Activated CD4-positive, alpha-beta memory T cell treated with anti-CD3 and anti-CD28 coated beads for 36 hours (primary cell): ENCODE measurements at regions of chr19 and their contacts with region 1.

Region 1: GRCh38 chr19:40598121-40598917 is 2.9 kb upstream of the LTBP4 start:
- DNase-seq: peak; percentile 92
- H3K4me3 Mint-ChIP-seq: no peak overlapping the region
- H3K27ac Mint-ChIP-seq: no peak overlapping the region
- H3K4me1 Mint-ChIP-seq: peaks cover 54% of the 10 kb centered on the region
- H3K27me3 Mint-ChIP-seq: peaks cover 30% of the 10 kb centered on the region

Region 2: DNA sequence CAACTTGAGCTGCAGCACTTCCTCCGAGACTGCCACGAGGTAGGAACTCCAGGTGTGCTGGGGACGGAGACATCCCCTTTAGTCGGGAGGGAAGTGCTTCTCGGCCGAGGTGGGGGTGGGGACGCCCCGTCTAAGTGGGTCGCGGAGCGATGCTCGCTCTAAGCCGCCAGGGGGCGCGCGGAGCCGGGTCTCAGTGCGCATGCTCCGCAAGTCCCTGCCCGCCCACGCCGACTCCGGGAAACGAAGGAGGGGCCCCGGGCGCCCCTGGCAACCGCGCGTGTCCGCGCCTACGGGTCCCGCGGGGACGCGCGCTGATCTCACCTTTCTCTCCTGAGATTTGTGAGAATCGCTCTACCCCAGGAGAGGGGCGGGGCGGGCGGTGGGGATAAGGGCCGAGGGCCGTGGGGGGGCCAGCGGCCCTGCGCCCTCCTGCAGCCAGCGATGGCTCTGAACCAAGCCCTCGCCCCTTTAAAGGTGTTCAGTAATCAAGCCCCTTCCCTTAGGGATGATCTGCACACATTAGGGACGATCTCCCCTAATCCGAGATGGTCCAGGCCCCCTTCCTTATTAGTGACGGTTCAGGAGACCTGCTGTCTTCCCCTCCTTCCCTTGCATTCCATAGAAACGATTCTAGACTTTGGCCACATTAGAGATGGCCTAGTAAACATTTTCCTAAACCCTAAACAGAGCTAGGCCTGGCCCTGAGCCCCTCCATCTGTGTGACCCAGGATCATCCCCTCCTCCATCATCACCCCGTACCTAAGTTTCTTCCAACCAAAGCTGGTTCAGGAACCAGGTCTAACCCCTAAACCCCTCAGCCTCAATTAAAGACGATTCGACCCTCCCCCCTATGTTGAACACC is 69.0 kb before region 1 on chr19:
- CTCF ChIA-PET with region 1: interaction called, 9 read pairs
- POLR2A ChIA-PET with region 1: interaction called, 3 read pairs
- intact Hi-C with region 1: loop called (anchors 1 kb)
- DNase-seq: peak; percentile 94
- H3K4me3 Mint-ChIP-seq: peak overlapping the region; percentile 51
- H3K27ac Mint-ChIP-seq: peak overlapping the region; percentile 4
- H3K4me1 Mint-ChIP-seq: peaks cover 11% of the 10 kb centered on the region
- H3K27me3 Mint-ChIP-seq: peaks cover 18% of the 10 kb centered on the region

Region 3: GRCh38 chr19:40542202-40542859 is 56.0 kb before region 1 on chr19:
- CTCF ChIA-PET with region 1: interaction called, 15 read pairs
- POLR2A ChIA-PET with region 1: no interaction called
- intact Hi-C with region 1: no loop called
- DNase-seq: no peak
- H3K4me3 Mint-ChIP-seq: no peak overlapping the region
- H3K27ac Mint-ChIP-seq: no peak overlapping the region
- H3K4me1 Mint-ChIP-seq: no peaks in the 10 kb centered on the region
- H3K27me3 Mint-ChIP-seq: peaks cover 10% of the 10 kb centered on the region

Region 4: DNA sequence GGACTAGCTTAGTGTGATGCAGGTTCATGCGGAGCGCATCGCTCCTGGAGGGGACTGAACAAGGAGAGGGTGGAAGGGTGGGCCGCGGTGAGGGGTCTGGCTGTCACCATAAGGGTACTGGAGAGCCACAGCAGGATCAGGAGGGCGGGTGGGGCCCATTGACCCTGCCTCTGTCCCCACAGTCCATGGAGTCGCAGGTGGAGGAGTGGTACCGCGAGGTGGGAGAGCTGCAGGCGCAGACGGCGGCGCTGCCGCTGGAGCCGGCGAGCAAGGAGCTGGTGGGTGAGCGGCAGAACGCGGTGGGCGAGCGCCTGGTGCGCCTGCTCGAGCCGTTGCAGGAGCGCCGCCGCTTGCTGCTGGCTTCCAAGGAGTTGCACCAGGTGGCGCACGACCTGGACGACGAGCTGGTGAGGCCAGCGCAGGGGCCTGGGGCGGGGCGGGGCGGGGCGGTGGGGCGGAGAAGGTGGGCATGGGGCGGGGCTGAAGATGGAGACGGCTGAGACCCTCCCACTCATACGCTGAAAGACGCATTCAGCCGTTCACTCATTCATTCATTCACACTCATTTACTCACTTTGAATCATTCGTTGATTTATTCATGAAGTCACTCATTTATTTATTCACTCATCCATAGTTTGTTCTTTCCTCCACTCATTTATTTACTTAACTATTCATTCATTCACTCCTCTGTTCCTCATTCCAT is 49.2 kb before region 1 on chr19:
- CTCF ChIA-PET with region 1: interaction called, 34 read pairs
- POLR2A ChIA-PET with region 1: no interaction called
- intact Hi-C with region 1: loop called (anchors 1 kb)
- DNase-seq: peak; percentile 82
- H3K4me3 Mint-ChIP-seq: no peak overlapping the region
- H3K27ac Mint-ChIP-seq: no peak overlapping the region
- H3K4me1 Mint-ChIP-seq: peaks cover 7% of the 10 kb centered on the region
- H3K27me3 Mint-ChIP-seq: peaks cover 47% of the 10 kb centered on the region

Region 5: GRCh38 chr19:40570313-40571004 is 27.9 kb before region 1 on chr19:
- CTCF ChIA-PET with region 1: interaction called, 17 read pairs
- POLR2A ChIA-PET with region 1: no interaction called
- intact Hi-C with region 1: no loop called
- DNase-seq: peak; percentile 98
- H3K4me3 Mint-ChIP-seq: peak overlapping the region; percentile 67
- H3K27ac Mint-ChIP-seq: peak overlapping the region; percentile 61
- H3K4me1 Mint-ChIP-seq: peaks cover 16% of the 10 kb centered on the region
- H3K27me3 Mint-ChIP-seq: peaks cover 17% of the 10 kb centered on the region

Region 6: DNA sequence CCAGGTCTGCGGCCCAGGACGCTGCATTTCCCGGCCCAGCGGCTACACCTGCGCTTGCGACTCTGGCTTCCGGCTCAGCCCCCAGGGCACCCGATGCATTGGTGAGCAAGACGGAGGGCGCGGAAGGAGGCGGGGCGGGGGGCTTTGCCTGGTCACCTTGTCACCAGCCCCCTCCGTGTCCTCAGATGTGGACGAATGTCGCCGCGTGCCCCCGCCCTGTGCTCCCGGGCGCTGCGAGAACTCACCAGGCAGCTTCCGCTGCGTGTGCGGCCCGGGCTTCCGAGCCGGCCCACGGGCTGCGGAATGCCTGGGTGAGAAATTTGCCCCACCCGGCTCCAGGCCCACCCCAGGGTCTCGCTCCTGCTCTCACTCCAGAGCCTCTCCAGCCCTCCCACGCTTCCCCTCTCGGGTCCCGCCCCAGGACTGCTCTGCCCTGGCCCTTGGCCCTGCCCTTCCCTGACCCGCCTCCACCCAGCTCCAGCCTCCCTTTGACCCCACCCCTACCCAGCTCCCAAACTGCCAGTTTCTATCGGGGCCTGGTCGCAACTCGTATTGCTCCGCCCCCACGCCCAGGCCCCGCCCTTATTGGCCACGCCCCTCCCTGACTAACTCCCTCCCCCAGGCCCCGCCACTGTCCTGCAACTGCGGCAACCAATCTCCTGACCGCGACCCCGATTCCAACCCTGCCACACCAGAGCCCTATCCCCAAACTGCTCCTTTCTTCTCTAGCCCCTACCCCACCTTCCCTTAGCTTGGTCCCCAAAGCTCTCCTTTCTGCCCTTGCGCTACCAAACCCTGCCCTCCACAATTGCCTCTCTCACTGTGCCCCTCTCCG is 11.5 kb after region 1 on chr19:
- CTCF ChIA-PET with region 1: interaction called, 8 read pairs
- POLR2A ChIA-PET with region 1: interaction called, 27 read pairs
- intact Hi-C with region 1: loop called (anchors 2 kb)
- DNase-seq: peak; percentile 97
- H3K4me3 Mint-ChIP-seq: peak overlapping the region; percentile 72
- H3K27ac Mint-ChIP-seq: peak overlapping the region; percentile 84
- H3K4me1 Mint-ChIP-seq: peaks cover 61% of the 10 kb centered on the region
- H3K27me3 Mint-ChIP-seq: no peaks in the 10 kb centered on the region